Ovary (tissue), 10 donors: ENCODE measurements at regions of chr5 and their contacts with region 1.

Region 1: DNA sequence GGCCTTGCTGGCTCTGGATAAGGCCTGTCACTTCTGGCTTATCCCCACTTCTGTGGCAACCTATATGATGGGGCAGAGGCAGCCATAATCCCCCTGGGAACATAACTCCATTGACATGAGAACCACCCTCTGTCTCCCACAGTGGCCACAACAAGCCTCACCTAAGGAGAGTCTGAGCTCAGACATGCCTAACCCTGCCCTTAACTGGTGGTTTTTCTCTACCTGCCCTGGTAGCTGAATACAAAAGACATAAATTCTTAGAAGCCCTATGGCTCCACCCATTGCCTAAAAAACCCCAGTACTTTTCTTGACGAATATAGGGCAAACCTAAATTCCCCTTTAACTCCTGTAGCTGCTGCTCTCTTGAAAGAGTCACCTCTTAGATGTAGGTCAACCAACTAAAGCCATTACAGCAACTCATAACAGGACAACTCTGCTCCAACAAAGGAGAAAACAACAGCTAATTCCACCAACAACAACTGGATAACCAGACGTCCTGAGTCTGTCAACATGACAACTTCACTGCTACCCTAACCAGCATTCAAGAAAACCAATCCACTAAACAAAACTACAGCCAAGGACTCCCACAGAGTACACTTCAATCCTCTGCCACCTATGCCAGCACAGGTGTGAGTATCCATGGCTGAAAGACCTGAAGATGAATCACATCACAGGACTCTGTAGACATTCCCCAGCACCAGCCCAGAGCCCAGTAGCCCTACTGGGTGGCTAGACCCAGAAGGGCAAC is 427.7 kb downstream of the PRELID2 start:
- DNase-seq: no peak
- H3K4me3 ChIP-seq: no peak overlapping the region
- H3K27ac ChIP-seq: no peak overlapping the region
- H3K4me1 ChIP-seq: no peaks in the 10 kb centered on the region
- H3K27me3 ChIP-seq: no peaks in the 10 kb centered on the region
- CTCF ChIP-seq: no peak
- EP300 ChIP-seq: no peak
- POLR2A ChIP-seq: no peak

Region 2: DNA sequence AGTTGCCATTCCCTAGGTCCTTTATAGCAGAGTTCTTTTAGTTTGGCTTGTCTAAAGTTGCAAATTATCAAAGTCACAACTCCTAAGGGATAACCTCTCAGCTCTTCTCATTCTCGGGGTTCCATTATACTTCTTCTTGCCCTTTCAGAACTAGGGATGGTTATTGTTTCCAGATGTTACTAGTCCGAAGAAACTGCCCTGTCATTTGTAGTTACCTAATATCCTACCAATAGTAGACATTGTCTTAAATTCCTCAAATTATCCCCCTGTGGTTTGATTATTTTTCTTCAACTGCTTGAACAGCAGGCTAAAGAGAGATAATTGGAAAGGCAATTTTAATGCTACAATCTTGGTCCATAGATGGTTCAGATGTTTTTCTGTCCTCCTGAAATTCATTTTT is 527.0 kb before region 1 on chr5:
- intact Hi-C with region 1: no loop called
- DNase-seq: no peak
- H3K4me3 ChIP-seq: no peak overlapping the region
- H3K27ac ChIP-seq: no peak overlapping the region
- H3K4me1 ChIP-seq: no peaks in the 10 kb centered on the region
- H3K27me3 ChIP-seq: no peaks in the 10 kb centered on the region
- CTCF ChIP-seq: no peak
- EP300 ChIP-seq: no peak
- POLR2A ChIP-seq: no peak

Region 3: DNA sequence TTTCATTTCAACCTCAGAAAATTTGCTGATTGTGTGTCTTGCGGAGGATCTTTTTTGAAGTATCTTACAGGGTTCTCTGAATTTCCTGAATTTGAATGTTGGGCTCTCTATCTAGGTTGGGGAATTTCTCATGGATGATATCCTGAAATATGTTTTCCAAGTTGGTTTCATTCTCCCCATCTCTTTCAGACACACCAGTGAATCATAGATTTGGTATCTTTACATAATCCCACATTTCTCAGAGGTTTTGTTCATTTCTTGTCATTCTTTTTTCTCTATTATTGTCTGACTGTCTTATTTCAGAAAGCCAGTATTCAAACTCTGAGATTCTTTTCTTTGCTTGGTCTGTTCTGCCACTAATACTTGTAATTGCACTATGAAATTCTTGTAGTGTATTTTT is 29.2 kb before region 1 on chr5:
- intact Hi-C with region 1: loop called in 1 of 4 experiments (anchors 1 kb)
- DNase-seq: no peak
- H3K4me3 ChIP-seq: no peak overlapping the region
- H3K27ac ChIP-seq: no peak overlapping the region
- H3K4me1 ChIP-seq: no peaks in the 10 kb centered on the region
- H3K27me3 ChIP-seq: no peaks in the 10 kb centered on the region
- CTCF ChIP-seq: no peak
- EP300 ChIP-seq: no peak
- POLR2A ChIP-seq: no peak